ENCODE measurements at regions of chr10 and their contacts with region 1.

Region 1: DNA sequence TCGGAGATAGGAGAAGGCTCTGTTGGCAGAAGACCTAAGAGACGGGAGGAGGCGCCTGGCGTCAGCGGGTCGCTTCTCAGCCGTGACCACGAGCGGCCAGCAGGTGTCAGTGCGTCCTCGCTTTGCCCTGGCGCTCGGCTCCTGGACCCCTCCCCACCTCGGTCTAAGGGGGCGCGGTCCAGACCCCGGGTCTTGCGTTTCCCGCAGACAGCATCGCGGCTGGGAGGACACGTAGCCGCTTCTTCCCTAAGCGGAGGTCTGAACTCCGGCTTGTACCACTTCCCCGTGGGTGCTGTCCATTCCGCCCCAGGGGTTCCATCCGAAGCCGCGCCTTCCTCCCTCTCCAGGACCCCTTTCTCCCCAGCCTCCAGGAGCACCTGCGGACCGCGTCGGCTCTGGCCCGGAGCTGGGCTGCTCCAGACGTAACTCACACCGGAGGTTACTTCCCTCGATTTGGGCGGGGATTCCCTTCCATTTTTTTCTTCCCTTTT is 593 bp upstream of the ADRA2A start:
- DNase-seq: peak; percentile 84
- H3K4me3 Mint-ChIP-seq: peak overlapping the region; percentile 78
- H3K27ac Mint-ChIP-seq: no peak overlapping the region
- H3K4me1 Mint-ChIP-seq: peaks cover 7% of the 10 kb centered on the region
- H3K27me3 Mint-ChIP-seq: peaks cover 71% of the 10 kb centered on the region

Region 2: DNA sequence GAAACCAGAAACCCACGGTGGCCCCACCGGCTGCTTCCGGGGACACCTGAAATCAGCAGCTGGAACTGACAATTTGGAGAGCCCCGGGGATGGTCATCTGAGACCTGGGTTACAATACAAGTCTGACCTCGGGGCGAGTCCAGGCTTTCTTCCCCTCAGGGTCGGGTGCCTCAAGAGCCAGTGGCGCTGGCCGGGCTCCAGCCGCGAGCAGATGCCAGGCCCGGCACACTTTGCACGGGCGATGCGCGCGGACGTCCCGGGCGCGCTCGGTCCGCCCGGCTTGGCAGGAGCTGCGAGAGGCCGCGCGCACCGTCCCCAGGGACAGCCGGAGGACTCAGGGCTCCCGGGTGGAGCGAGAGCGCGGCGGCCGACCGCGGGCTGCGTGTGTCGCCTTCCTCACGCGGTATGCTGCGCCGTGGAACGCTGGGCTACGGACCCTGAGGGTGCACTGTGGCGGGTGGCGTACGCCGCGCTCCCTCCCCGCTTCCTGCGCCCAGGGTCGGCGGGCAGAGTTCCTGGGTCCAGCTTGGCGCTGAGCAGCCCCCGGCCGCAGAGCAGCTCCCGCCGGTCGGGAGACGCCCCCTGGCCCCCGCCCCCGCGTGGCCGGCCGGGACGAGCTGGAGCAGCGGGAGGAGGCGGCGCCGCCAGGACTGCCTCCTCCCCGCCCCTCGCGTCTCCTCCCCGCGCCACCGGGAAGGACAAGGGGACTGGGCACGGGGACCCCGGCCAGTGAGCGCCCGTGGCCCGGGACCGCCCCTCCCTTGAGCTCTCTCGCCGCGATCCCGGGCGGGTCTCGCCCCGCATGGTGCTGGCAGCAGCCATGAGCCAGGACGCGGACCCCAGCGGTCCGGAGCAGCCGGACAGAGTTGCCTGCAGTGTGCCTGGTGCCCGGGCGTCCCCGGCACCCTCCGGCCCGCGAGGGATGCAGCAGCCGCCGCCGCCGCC is 432.3 kb before region 1 on chr10 and contains the start of gene RBM20:
- intact Hi-C with region 1: loop called (anchors 10 kb)
- DNase-seq: peak; percentile 70
- H3K4me3 Mint-ChIP-seq: peak within 1 kb of the TSS; percentile 86
- H3K27ac Mint-ChIP-seq: peak within 1 kb of the TSS; percentile 28
- H3K4me1 Mint-ChIP-seq: peaks cover 15% of the 10 kb centered on the region
- H3K27me3 Mint-ChIP-seq: peaks cover 71% of the 10 kb centered on the region
- total RNA-seq, gene RBM20: 0.05 TPM in 1 of 2 replicates, not detected in the other

Region 3: GRCh38 chr10:111037864-111038263 is 38.4 kb before region 1 on chr10:
- intact Hi-C with region 1: no loop called
- DNase-seq: no peak
- H3K4me3 Mint-ChIP-seq: no peak overlapping the region
- H3K27ac Mint-ChIP-seq: no peak overlapping the region
- H3K4me1 Mint-ChIP-seq: no peaks in the 10 kb centered on the region
- H3K27me3 Mint-ChIP-seq: peaks cover 5% of the 10 kb centered on the region

Region 4: GRCh38 chr10:111360260-111360925 is 284.2 kb after region 1 on chr10:
- intact Hi-C with region 1: loop called (anchors 10 kb)
- DNase-seq: no peak
- H3K4me3 Mint-ChIP-seq: no peak overlapping the region
- H3K27ac Mint-ChIP-seq: no peak overlapping the region
- H3K4me1 Mint-ChIP-seq: no peaks in the 10 kb centered on the region
- H3K27me3 Mint-ChIP-seq: peaks cover 9% of the 10 kb centered on the region

Region 5: DNA sequence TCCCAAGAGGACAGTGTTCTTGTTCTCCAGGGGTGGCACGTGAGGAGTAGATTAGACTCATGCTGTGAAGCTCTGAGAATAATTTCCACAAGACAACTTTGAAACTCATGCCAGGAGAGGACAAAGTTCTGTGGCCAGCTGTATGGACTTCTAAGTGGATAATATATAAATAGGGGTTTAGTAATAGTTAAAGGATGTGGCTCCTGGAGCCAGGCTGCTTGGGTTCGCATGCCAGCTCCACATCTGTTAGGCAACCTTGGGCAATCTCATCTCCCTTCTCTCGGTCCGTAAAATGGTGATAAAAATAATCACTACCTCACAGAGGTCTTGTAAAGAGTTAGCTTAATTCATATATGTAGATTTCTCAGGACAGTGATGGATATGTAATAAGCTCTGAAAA is 1333.5 kb after region 1 on chr10:
- intact Hi-C with region 1: no loop called
- DNase-seq: no peak
- H3K4me3 Mint-ChIP-seq: no peak overlapping the region
- H3K27ac Mint-ChIP-seq: no peak overlapping the region
- H3K4me1 Mint-ChIP-seq: peaks cover 3% of the 10 kb centered on the region
- H3K27me3 Mint-ChIP-seq: no peaks in the 10 kb centered on the region

Measured in activated CD4-positive, alpha-beta T cell treated with anti-CD3 and anti-CD28 coated beads, Interleukin-2, amount 10 ng/mL, durations not matched to agents 24 days and 14 days (primary cell).